ENCODE measurements at regions of chr2 and their contacts with region 1.

Region 1: DNA sequence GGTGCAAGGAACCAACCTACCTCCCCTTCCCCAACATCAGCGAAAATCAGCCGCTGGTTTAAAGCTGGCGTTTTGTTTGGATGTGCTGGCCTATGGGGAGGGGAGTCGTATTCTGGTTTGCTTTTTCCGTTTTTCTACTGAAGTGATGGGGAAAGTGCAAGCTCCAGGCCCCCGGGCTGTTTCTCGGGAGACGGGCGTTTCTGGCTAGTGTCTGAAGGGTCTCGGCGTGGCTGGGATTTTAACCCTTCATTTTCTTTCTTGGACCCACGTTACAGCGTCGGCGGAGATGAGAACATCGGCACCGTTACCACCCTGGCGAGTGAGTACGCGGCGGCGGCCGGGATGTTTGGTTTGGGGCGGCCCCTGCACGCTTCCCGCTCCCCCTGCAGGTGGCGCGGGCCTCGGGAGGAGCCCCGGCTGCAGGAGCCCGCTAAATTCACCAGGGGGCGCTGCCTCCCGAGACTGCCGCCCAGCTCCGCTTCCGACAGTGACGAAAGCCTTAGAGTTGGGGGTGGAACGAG is 70.7 kb downstream of the PLB1 start:
- DNase-seq: no peak
- H3K4me3 ChIP-seq: peak overlapping the region; percentile 68
- CTCF ChIP-seq: peak; percentile 100

Region 2: GRCh38 chr2:28239207-28239606 is 327.4 kb before region 1 on chr2:
- CTCF ChIA-PET with region 1: no interaction called
- POLR2A ChIA-PET with region 1: no interaction called
- DNase-seq: no peak
- H3K4me3 ChIP-seq: no peak overlapping the region
- CTCF ChIP-seq: no peak

Region 3: DNA sequence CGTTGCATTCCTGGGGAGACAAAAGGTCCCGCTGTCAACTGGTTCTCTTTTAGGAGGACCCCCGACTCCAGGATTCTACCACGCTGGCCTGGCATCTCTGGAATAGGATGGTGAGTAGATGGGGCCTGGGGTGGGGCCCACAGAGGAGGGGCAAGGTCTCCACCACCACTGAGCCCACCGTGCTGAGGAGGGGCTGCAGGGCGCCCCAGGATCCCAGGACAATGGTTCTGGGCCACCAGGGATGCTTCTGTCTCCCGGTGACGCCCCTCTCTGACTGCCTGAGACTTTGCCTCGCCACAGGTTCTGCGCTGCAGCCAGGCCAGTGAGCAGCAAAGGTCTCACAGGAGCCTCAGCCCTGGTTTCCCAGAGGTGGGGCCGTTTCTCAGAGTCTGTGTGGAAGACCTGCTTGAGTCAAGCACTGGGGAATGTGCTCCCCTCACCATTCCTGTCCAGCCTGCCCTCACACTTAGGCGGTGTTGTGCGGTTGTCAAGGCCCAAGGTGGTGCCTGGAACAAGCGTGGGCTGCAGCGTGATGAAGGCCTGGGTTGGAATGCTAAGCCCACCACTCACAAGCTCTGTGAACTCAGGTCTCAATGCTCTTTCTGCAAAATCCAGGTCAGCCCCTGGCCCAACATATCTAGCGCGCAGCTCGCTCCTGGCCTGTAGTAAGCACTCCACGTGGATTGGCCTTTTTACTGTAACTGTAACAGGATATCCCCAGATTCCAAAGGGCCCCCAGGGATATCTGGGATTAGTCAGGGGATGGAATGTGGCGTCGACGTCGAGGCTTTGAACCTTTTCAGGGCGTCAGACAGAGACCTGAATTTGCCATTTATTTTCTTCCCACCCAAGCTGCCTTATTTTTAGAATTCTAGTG is 23.2 kb before region 1 on chr2:
- CTCF ChIA-PET with region 1: interaction called, 13 read pairs
- POLR2A ChIA-PET with region 1: no interaction called
- DNase-seq: no peak
- H3K4me3 ChIP-seq: no peak overlapping the region
- CTCF ChIP-seq: no peak

Region 4: DNA sequence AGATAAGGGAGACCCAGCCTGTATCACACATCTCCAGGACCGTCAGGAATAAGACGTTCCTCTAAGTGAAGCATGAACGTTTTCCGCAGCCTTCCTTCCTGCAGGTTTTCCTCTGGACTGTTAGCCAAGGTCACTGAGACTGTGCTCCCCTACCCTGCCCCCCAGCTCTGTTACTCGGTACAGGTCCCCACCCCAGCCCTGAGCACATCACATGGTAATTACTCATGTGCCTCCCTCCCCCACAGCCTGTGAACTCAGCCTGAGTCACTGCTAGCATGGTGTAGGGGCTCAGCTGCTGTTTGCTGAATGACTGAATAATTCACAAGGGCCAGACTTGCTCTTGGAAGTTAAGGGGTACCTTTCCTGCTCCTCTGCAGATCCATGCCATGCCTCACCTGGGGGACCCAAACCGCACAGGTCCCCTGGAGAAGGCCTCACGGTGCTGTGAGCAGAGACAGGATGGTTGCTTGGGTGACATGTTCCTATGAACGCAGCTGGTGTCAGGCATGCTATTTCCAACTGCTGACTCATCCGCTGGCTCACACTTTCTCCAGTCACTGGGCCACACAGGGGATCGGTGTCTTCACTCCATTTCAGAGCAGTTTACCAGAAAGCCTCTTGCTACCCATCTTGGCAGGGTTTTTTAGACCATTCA is 17.4 kb after region 1 on chr2:
- CTCF ChIA-PET with region 1: interaction called, 54 read pairs
- POLR2A ChIA-PET with region 1: no interaction called
- DNase-seq: peak; percentile 55
- H3K4me3 ChIP-seq: peak overlapping the region; percentile 36
- CTCF ChIP-seq: no peak

Region 5: GRCh38 chr2:28764909-28765711 is 198.5 kb after region 1 on chr2:
- CTCF ChIA-PET with region 1: interaction called, 16 read pairs
- POLR2A ChIA-PET with region 1: no interaction called
- DNase-seq: peak; percentile 59
- H3K4me3 ChIP-seq: no peak overlapping the region
- CTCF ChIP-seq: no peak

Region 6: DNA sequence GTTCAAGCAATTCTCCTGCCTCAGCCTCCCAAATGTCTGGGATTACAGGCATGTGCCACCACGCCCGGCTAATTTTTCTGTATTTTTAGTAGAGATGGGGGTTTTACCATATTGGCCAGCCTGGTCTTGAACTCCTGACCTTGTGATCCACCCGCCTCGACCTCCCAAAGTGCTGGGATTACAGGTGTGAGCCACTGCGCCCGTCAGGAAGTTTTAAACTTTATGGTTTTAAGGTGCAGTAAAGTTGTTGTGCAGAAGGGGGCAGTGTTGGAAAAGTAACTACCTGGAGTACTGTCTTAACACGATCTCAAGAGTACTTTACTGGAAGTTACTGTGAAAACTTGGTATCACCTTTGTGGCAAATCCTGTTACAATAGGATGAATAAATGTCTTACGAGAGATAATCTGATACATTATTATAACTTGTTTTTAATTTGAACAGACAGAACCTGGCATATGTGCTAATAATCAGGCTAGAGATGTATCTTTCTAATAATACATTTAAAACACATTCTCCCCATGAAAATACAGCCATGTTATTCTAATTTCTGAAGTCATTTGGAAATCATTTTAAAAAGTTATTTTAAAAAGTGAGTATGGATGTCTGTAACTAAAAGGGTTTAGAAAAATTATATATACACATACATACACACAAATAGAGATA is 254.8 kb after region 1 on chr2:
- CTCF ChIA-PET with region 1: interaction called, 17 read pairs
- POLR2A ChIA-PET with region 1: no interaction called
- DNase-seq: no peak
- H3K4me3 ChIP-seq: no peak overlapping the region
- CTCF ChIP-seq: peak; percentile 61

Region 7: GRCh38 chr2:29374823-29375222 is 808.2 kb after region 1 on chr2:
- CTCF ChIA-PET with region 1: no interaction called
- POLR2A ChIA-PET with region 1: no interaction called
- DNase-seq: no peak
- H3K4me3 ChIP-seq: no peak overlapping the region
- CTCF ChIP-seq: no peak

Measured in AG04449 (cell line).